Naive thymus-derived CD4-positive, alpha-beta T cell (primary cell): ENCODE measurements at regions of chr10 and their contacts with region 1.

Region 1: GRCh38 chr10:92699518-92700381 is 10.0 kb downstream of the HHEX start:
- DNase-seq: peak in 4 of 9 donors; percentile 12 to 32 (median 20)
- ATAC-seq: peak; percentile 57
- H3K4me3 ChIP-seq: peak overlapping the region; percentile 46
- H3K4me3 Mint-ChIP-seq: peak overlapping the region; percentile 74 to 89 (median 85)
- H3K27ac ChIP-seq: no peak overlapping the region
- H3K27ac Mint-ChIP-seq: peak overlapping the region in 1 of 9 donors; percentile 74
- H3K4me1 ChIP-seq: peaks cover 11 to 18% of the 10 kb centered on the region in 2 donors
- H3K4me1 Mint-ChIP-seq: peaks cover 15 to 36% (median 25%) of the 10 kb centered on the region in 7 donors
- H3K27me3 ChIP-seq: peaks cover 6 to 10% of the 10 kb centered on the region in 2 donors
- H3K27me3 Mint-ChIP-seq: peaks cover 56 to 86% (median 77%) of the 10 kb centered on the region in 5 donors

Region 2: GRCh38 chr10:91340613-91341362 is 1359.0 kb before region 1 on chr10:
- CTCF ChIA-PET with region 1: no interaction called
- POLR2A ChIA-PET with region 1: no interaction called
- intact Hi-C with region 1: no loop called
- DNase-seq: no peak
- ATAC-seq: no peak
- H3K4me3 ChIP-seq: no peak overlapping the region
- H3K4me3 Mint-ChIP-seq: no peak overlapping the region
- H3K27ac ChIP-seq: no peak overlapping the region
- H3K27ac Mint-ChIP-seq: no peak overlapping the region
- H3K4me1 ChIP-seq: no peaks in the 10 kb centered on the region
- H3K4me1 Mint-ChIP-seq: no peaks in the 10 kb centered on the region
- H3K27me3 ChIP-seq: no peaks in the 10 kb centered on the region
- H3K27me3 Mint-ChIP-seq: peaks cover 0 to 6% (median 0%) of the 10 kb centered on the region in 5 donors

Region 3: GRCh38 chr10:91824076-91824475 is 875.7 kb before region 1 on chr10:
- CTCF ChIA-PET with region 1: no interaction called
- POLR2A ChIA-PET with region 1: no interaction called
- intact Hi-C with region 1: no loop called
- DNase-seq: no peak
- ATAC-seq: no peak
- H3K4me3 ChIP-seq: no peak overlapping the region
- H3K4me3 Mint-ChIP-seq: no peak overlapping the region
- H3K27ac ChIP-seq: no peak overlapping the region
- H3K27ac Mint-ChIP-seq: peak overlapping the region in 1 of 9 donors; percentile 36
- H3K4me1 ChIP-seq: no peaks in the 10 kb centered on the region
- H3K4me1 Mint-ChIP-seq: peaks cover 0 to 6% (median 0%) of the 10 kb centered on the region in 7 donors
- H3K27me3 ChIP-seq: no peaks in the 10 kb centered on the region
- H3K27me3 Mint-ChIP-seq: no peaks in the 10 kb centered on the region

Region 4: GRCh38 chr10:92678206-92678605 is 21.5 kb before region 1 on chr10:
- CTCF ChIA-PET with region 1: no interaction called
- POLR2A ChIA-PET with region 1: no interaction called
- intact Hi-C with region 1: no loop called
- DNase-seq: no peak
- ATAC-seq: no peak
- H3K4me3 ChIP-seq: no peak overlapping the region
- H3K4me3 Mint-ChIP-seq: no peak overlapping the region
- H3K27ac ChIP-seq: no peak overlapping the region
- H3K27ac Mint-ChIP-seq: no peak overlapping the region
- H3K4me1 ChIP-seq: no peaks in the 10 kb centered on the region
- H3K4me1 Mint-ChIP-seq: no peaks in the 10 kb centered on the region
- H3K27me3 ChIP-seq: no peaks in the 10 kb centered on the region
- H3K27me3 Mint-ChIP-seq: peaks cover 7 to 21% (median 12%) of the 10 kb centered on the region in 5 donors

Region 5: GRCh38 chr10:92689663-92690210 is 10.0 kb before region 1 on chr10 and contains the start of gene HHEX:
- CTCF ChIA-PET with region 1: no interaction called
- POLR2A ChIA-PET with region 1: no interaction called
- intact Hi-C with region 1: loop called (anchors 1 kb)
- DNase-seq: peak in 3 of 9 donors; percentile 19 to 50 (median 39)
- ATAC-seq: peak; percentile 82
- H3K4me3 ChIP-seq: peak within 1 kb of the TSS; percentile 37
- H3K4me3 Mint-ChIP-seq: peak within 1 kb of the TSS; percentile 73 to 90 (median 82)
- H3K27ac ChIP-seq: no peak within 1 kb of the TSS
- H3K27ac Mint-ChIP-seq: no peak within 1 kb of the TSS
- H3K4me1 ChIP-seq: peaks cover 0 to 29% of the 10 kb centered on the region in 2 donors
- H3K4me1 Mint-ChIP-seq: peaks cover 16 to 31% (median 27%) of the 10 kb centered on the region in 7 donors
- H3K27me3 ChIP-seq: peaks cover 10 to 26% of the 10 kb centered on the region in 2 donors
- H3K27me3 Mint-ChIP-seq: peaks cover 40 to 88% (median 75%) of the 10 kb centered on the region in 5 donors
- total RNA-seq, gene HHEX: 0.27 to 21.4 (median 5.5) TPM in 3 of 5 experiments, not detected in the others